Posterior cingulate gyrus (tissue), 11 donors: ENCODE measurements at regions of chr16 and their contacts with region 1.

Region 1: GRCh38 chr16:89560378-89561141 is at the start of gene RPL13:
- DNase-seq: peak; percentile 93 to 99 (median 95)

Region 2: GRCh38 chr16:89330177-89330856 is 230.2 kb before region 1 on chr16:
- intact Hi-C with region 1: loop called (anchors 2 kb)
- DNase-seq: peak in 3 of 10 donors; percentile 54 to 79 (median 72)

Region 3: GRCh38 chr16:89490387-89491237 is 69.9 kb before region 1 on chr16 and contains the start of gene ANKRD11:
- intact Hi-C with region 1: loop called (anchors 5 kb)
- DNase-seq: peak; percentile 98 to 100 (median 99)

Region 4: DNA sequence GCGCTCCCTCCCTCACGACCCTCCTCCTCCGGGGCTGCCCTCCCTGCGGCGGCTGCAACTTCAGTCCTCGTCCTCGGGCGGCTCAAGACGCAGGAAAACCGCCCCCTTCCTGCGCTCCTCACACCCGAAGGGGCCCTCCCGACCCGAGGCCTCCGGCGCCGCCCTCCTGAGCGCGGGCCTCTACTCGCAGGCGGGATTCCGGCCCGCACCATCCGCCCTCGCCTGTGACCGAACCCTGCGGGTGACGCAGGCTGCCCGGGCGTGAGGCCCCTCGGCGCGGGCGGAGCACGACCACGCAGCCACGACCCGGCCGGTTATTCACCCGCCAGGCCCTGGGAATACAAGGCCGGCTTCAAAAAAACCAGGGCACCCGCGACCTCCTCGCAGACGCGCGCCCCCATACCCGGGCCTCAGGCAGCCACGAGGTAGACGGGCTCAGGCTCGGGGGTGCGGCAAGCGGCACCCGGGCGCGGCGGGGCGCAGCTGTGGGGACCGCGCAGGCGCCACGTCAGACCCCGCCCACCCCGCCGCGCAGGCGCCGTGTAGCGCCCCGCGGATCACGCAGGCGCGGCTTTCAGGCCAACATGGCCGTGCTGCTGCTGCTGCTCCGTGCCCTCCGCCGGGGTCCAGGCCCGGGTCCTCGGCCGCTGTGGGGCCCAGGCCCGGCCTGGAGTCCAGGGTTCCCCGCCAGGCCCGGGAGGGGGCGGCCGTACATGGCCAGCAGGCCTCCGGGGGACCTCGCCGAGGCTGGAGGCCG is 52.5 kb before region 1 on chr16 and contains the start of gene SPG7:
- intact Hi-C with region 1: loop called (anchors 5 kb)
- DNase-seq: peak; percentile 61 to 97 (median 78)

Region 5: DNA sequence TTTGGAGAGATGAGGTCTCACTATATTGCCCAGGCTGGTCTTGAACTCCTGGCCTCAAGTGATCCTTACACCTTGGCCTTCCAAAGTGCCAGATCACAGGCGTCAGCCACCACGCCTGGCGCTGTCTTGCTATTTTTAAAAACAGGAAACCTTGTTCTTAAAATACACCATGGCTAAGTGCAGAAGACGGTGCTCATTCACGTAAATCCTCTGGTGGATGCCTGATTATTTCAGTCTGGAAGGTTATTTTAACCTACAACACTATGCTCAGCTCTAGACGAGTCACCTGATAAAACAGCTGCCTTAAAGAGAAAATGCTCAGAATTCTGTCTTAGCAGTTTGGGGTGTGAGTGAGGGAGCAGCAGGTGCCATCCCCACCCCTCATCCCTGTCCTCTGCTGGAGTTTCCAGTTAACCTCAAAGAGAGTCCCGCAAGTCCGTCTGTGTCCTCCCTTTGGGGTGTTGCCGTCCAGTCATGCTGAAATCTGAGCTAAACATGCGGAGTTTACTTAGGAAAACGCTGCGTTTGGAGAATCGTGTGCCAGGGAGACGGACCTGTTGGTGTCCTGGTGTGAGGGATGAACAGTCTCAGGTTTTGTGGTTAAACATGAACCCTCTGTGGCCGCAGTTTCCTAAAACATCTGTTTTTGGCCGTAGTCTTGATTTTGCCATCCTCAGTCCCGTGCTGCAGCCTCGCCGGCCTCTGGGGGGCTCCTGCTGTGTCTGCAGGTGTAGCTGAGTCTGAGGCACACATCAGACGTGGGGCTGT is 35.2 kb before region 1 on chr16:
- intact Hi-C with region 1: no loop called
- DNase-seq: no peak

Region 6: GRCh38 chr16:89623511-89624261 is 63.1 kb after region 1 on chr16:
- intact Hi-C with region 1: no loop called
- DNase-seq: no peak

Region 7: DNA sequence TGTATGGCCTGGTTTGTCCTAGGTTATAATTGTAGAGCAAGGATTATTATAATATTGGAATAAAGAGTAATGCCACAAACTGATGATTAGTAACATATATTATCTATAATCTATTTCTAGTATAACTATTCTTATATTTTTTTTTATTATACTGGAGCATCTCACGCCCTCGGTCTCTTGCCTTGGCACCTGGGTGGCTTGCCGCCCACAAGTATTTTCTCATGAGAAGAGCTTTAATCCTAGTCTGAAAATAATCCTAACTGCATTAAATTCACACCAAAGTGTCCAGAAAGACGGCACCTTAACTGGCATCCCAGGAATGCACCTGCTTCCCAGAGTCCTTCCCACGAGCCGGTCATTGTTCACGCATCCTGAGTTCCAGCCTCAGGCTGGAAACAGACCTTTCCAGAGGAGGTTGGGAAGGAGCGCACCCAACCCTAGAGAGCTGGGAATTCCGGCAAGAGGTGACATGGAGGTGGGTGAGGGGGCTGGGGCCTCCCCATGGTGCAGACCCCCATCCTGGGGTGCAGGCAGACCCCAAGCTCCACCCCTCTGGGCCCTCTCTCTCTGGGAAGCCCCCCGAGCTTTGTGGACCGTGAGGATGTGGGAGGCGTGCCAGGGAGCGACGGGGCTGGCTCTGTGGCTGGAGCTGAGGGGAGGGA is 81.0 kb after region 1 on chr16:
- intact Hi-C with region 1: loop called (anchors 10 kb)
- DNase-seq: no peak

Region 8: GRCh38 chr16:89670496-89671431 is 110.2 kb after region 1 on chr16:
- intact Hi-C with region 1: no loop called
- DNase-seq: no peak

Region 9: DNA sequence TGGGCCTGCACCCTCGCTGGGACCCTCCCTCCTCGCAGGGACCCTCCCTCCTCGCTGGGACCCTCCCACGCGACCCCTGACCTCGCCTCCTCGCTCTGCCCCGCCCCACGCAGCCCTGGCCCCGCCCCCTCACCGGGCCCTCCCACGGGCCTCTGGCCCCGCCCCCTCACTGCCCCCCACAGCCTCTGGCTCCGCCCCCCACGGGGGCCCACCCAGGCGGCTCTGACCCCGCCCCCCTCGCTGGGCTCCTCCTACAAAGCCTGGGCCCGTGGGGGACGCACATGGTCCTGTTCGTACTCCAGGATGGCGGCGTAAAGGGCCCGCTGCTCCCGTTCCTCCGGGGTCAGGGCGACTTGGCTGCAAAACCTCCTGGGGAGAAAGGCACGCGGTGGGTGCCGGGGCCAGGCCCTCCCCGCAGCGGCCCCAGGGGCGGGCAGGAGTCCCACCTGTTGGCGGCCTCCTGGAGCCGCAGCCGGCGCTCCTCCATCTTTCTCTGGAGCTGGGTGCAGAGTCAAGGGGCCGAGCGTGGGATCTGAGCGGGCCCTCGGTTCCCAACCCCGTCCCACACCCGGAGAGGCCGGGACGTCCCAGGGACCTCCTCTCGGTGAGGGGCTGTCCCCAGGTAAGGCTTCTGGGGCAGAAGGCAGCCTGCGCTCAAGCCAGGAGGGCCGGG is 151.2 kb after region 1 on chr16:
- intact Hi-C with region 1: no loop called
- DNase-seq: no peak